ENCODE measurements at regions of chr17 and their contacts with region 1.

Region 1: GRCh38 chr17:78250891-78251794 is 19.7 kb downstream of the TMEM235 start:
- H3K4me3 Mint-ChIP-seq: no peak overlapping the region
- H3K27ac Mint-ChIP-seq: peak overlapping the region; percentile 47
- H3K4me1 Mint-ChIP-seq: peaks cover 55% of the 10 kb centered on the region
- H3K27me3 Mint-ChIP-seq: peaks cover 23% of the 10 kb centered on the region

Region 2: DNA sequence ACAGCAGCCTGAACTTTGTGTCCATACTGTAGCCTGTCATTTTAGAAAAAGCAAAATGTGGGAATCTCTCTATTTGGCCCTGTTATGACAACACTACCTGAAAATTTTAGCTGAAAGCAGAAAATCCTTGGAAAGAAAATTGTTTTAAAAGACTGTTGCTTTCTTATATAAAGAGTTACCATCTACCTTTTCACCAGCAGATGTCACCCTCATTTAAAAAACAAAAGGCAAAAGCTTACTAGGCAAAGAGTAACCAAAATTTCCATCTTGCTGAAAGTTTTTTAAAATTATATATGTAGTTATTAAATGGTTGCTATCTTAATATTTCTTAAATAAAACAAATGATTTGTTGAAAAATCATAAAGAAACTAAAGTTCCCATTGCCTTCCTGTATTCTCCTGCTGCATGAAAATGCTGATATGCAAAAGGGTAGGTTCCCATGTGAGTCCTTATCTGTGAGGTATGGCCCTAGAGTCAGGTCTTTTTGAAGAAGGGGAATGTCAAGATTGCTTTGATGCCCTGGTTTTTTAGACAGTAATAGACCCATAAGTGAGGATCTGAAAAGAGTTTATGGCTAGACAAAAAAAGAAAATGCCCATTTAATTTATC is 231.7 kb before region 1 on chr17:
- intact Hi-C with region 1: loop called (anchors 5 kb)
- H3K4me3 Mint-ChIP-seq: no peak overlapping the region
- H3K27ac Mint-ChIP-seq: no peak overlapping the region
- H3K4me1 Mint-ChIP-seq: peaks cover 11% of the 10 kb centered on the region
- H3K27me3 Mint-ChIP-seq: no peaks in the 10 kb centered on the region

Region 3: DNA sequence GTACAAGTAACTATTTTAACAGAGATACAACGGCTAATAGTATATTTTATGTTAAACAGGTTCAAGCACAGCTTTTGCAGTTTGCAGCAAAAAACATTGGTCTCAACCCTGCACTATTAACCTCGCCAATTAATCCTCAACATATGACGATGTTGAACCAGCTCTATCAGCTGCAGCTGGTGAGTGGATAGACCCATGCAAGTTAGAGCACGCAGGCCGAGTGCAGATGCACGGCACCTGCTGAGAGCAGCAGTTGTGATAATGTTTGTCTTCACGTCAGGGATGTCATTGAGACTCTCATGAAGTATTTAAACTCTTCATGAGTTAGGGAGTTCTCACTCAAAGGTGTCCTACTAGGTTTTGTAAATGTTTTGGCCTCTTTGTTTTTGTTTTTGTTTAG is 168.2 kb before region 1 on chr17:
- intact Hi-C with region 1: loop called (anchors 10 kb)
- H3K4me3 Mint-ChIP-seq: no peak overlapping the region
- H3K27ac Mint-ChIP-seq: peak overlapping the region; percentile 33
- H3K4me1 Mint-ChIP-seq: peaks cover 26% of the 10 kb centered on the region
- H3K27me3 Mint-ChIP-seq: no peaks in the 10 kb centered on the region

Region 4: GRCh38 chr17:78112518-78113226 is 138.5 kb before region 1 on chr17:
- intact Hi-C with region 1: loop called (anchors 2 kb)
- H3K4me3 Mint-ChIP-seq: no peak overlapping the region
- H3K27ac Mint-ChIP-seq: peak overlapping the region; percentile 3
- H3K4me1 Mint-ChIP-seq: peaks cover 38% of the 10 kb centered on the region
- H3K27me3 Mint-ChIP-seq: no peaks in the 10 kb centered on the region

Region 5: GRCh38 chr17:78421484-78422266 is 170.5 kb after region 1 on chr17:
- intact Hi-C with region 1: loop called (anchors 5 kb)
- H3K4me3 Mint-ChIP-seq: no peak overlapping the region
- H3K27ac Mint-ChIP-seq: peak overlapping the region; percentile 52
- H3K4me1 Mint-ChIP-seq: peaks cover 50% of the 10 kb centered on the region
- H3K27me3 Mint-ChIP-seq: no peaks in the 10 kb centered on the region